A549 (cell line): ENCODE measurements at regions of chr11 and their contacts with region 1.

Region 1: GRCh38 chr11:64887757-64888405 is 9.5 kb upstream of the EHD1 start:
- DNase-seq: peak; percentile 66 to 80
- ATAC-seq: peak; percentile 50 to 76
- H3K4me3 ChIP-seq: peak overlapping the region; percentile 7; the same call in 1 of the 3 replicates
- H3K27ac ChIP-seq: peak overlapping the region; percentile 92 to 97
- H3K4me1 ChIP-seq: peaks cover 74% of the 10 kb centered on the region
- CTCF ChIP-seq: peak; percentile 95
- EP300 ChIP-seq: no peak
- POLR2A ChIP-seq: peak; percentile 30
- RAD21 ChIP-seq: peak; percentile 43 to 60

Region 2: DNA sequence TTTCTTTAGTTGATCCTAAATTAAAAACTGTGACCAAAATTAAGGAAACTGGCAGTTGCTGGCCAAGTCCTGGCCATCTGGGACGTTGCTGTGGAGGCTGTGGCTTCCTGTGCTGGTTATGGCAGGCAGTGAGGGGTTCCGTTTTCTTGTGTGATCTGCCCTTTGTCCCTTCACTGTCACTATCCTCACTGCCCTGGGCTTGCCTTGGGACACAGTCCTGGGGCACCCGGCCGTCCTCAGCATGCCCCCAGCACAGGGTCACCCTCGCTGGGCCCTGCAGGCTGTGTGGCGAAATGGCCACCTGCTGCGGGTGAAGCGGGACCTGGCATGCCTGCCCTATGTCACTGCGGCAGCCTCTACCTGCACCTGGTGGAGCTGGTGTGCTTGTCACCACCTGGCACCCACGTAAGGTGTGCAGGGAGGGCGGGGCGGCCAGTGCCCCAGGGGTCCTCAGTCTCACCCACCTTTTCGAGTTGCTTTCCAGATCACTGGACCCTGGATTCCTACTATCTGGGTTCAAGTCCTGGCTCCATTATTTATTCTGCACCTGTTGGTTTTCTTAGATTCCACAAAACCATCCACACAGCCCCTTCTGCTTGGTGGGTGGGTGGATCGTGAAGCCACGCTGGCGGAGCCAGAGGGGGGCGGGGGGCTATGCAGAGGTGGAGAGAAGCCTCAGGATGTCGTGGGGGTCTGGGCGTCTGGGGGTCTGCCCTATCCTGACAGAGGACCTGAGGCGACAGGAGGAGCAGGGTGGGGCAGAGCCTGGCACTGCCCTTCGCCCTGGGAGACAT is 349.2 kb before region 1 on chr11:
- CTCF ChIA-PET with region 1: no interaction called
- POLR2A ChIA-PET with region 1: no interaction called
- DNase-seq: no peak
- ATAC-seq: no peak
- H3K4me3 ChIP-seq: no peak overlapping the region
- H3K27ac ChIP-seq: no peak overlapping the region
- H3K4me1 ChIP-seq: peaks cover 13% of the 10 kb centered on the region
- CTCF ChIP-seq: no peak
- EP300 ChIP-seq: no peak
- POLR2A ChIP-seq: no peak
- RAD21 ChIP-seq: no peak

Region 3: GRCh38 chr11:64900263-64900678 is 12.4 kb after region 1 on chr11:
- CTCF ChIA-PET with region 1: interaction called, 313 read pairs
- POLR2A ChIA-PET with region 1: no interaction called
- DNase-seq: peak; percentile 46 to 59
- ATAC-seq: peak in 1 of 2 experiments; percentile 33; a peak in 2 of 6 replicates
- H3K4me3 ChIP-seq: no peak overlapping the region
- H3K27ac ChIP-seq: peak overlapping the region in 1 of 2 experiments; percentile 64; a peak in 3 of 6 replicates
- H3K4me1 ChIP-seq: peaks cover 4% of the 10 kb centered on the region; the same call in 2 of the 3 replicates
- CTCF ChIP-seq: no peak
- EP300 ChIP-seq: no peak
- POLR2A ChIP-seq: no peak
- RAD21 ChIP-seq: no peak

Region 4: DNA sequence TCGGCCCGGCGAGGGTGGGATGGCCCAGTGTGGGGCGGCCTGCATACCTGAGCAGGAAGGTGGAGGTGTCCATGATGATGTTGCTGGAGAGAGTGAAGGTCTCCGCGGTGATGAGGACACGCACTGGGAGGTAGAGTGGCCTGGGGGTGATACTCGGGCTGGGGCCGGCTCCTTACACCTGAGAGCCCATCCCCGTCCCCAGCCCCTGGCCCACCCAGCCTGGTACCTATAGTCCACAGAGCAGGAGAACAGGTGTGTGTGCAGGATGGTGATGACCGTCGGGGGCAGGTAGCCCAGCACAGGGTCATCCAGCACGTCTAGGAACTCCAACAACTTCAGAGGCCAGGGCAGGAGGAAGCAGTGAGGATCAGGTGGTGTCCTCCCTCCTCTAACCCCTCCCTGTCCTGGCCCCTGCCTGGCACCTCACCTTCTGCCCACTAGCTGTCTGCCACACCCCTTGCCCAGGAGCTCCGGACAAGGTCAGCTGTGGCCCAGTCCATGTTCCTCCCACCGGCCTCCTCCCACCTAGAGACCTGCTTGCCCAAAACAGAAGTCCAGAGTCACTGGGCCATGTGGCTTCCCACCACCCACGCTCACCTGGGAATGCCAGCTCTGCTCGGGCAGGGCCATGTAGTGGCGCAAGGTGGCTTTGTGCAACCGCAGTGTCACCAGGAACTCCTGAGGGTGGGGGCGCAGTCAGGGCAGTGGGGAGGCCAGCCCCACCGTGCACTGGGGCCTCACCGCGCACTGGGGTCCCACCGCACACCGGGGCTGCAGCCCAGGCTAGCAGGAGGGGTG is 17.8 kb after region 1 on chr11:
- CTCF ChIA-PET with region 1: interaction called, 132 read pairs
- POLR2A ChIA-PET with region 1: no interaction called
- DNase-seq: no peak
- ATAC-seq: no peak
- H3K4me3 ChIP-seq: no peak overlapping the region
- H3K27ac ChIP-seq: no peak overlapping the region
- H3K4me1 ChIP-seq: no peaks in the 10 kb centered on the region; the same call in 2 of the 3 replicates
- CTCF ChIP-seq: no peak
- EP300 ChIP-seq: no peak
- POLR2A ChIP-seq: no peak
- RAD21 ChIP-seq: no peak

Region 5: GRCh38 chr11:64916775-64917662 is 29.1 kb after region 1 on chr11 and contains the start of gene ATG2A:
- CTCF ChIA-PET with region 1: interaction called, 132 read pairs
- POLR2A ChIA-PET with region 1: no interaction called
- DNase-seq: peak; percentile 99
- ATAC-seq: peak; percentile 91 to 97
- H3K4me3 ChIP-seq: peak within 1 kb of the TSS; percentile 70
- H3K27ac ChIP-seq: peak within 1 kb of the TSS; percentile 77 to 91
- H3K4me1 ChIP-seq: peaks cover 15% of the 10 kb centered on the region
- CTCF ChIP-seq: no peak
- EP300 ChIP-seq: no peak
- POLR2A ChIP-seq: peak; percentile 79
- RAD21 ChIP-seq: no peak
- polyA plus RNA-seq, gene ATG2A: 3.1 and 4.0 TPM in 2 replicates